Activated B cell treated with CpG ODN at 0.5 μM for 24 hours (primary cell): ENCODE measurements at regions of chr9 and their contacts with region 1.

Region 1: DNA sequence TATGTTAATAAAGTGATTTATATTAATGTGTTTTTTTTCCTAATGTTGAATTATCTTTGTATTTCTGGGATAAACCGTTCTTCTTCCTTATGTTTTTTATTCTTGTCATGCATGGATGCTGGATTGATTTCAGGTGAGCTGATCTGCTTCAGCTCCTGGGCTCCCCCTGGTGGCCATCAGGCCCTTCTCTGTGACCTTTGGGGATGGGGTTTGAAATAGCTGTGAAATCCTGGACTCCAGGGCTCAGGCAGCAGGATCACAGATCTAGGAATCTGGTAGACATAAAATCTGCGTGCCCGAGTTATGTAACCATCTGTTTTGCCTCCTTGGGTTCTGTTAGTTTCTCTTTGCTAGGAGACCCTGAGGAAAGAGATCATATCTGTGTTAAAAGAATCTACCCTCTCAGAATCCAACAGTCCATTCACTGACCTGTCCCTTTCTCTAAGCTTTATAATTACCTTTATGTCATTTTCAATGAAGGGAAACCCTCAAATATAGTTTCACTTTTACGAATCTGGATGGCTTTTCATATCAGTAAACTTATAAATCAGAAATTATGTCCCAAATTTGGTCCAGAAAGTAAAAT is 12.2 kb upstream of the OR13J1 start:
- DNase-seq: peak; percentile 74
- ATAC-seq: peak; percentile 58
- H3K4me3 Mint-ChIP-seq: no peak overlapping the region
- H3K27ac Mint-ChIP-seq: no peak overlapping the region
- H3K4me1 Mint-ChIP-seq: no peaks in the 10 kb centered on the region
- H3K27me3 Mint-ChIP-seq: peaks cover 10% of the 10 kb centered on the region
- CTCF ChIP-seq: no peak

Region 2: DNA sequence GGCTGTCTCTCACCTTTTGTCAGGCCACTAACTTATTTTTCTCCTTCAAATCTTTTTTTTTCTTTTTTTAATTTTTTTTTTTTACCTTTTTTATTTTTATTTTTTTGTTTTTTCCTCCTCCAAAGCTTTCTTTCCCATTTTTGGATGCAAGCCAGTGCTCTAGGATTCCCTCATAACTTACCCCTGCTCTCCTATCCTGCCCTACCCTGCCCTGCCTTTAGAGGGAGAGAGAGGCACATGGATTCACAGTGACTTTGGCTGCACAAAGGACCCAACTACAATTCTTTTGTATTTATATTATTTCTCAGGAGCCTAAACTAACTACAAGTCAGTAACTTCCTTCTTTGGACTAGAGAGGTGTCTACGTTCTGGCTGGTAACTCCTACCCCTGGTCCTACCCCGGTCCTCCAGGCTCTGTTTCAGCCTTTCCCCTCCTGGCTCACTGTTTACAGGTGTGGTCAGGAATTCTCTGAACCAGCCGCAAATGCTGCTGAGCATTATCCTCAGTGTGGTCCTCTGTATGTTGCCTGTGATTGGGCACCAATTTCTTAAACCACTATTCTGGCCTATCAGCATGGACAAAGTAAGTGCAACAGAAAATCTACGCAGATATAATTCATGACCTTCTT is 400.9 kb before region 1 on chr9:
- CTCF ChIA-PET with region 1: no interaction called
- POLR2A ChIA-PET with region 1: no interaction called
- intact Hi-C with region 1: loop called (anchors 2 kb)
- DNase-seq: no peak
- ATAC-seq: peak; percentile 66
- H3K4me3 Mint-ChIP-seq: no peak overlapping the region
- H3K27ac Mint-ChIP-seq: no peak overlapping the region
- H3K4me1 Mint-ChIP-seq: no peaks in the 10 kb centered on the region
- H3K27me3 Mint-ChIP-seq: peaks cover 10% of the 10 kb centered on the region
- CTCF ChIP-seq: no peak

Region 3: DNA sequence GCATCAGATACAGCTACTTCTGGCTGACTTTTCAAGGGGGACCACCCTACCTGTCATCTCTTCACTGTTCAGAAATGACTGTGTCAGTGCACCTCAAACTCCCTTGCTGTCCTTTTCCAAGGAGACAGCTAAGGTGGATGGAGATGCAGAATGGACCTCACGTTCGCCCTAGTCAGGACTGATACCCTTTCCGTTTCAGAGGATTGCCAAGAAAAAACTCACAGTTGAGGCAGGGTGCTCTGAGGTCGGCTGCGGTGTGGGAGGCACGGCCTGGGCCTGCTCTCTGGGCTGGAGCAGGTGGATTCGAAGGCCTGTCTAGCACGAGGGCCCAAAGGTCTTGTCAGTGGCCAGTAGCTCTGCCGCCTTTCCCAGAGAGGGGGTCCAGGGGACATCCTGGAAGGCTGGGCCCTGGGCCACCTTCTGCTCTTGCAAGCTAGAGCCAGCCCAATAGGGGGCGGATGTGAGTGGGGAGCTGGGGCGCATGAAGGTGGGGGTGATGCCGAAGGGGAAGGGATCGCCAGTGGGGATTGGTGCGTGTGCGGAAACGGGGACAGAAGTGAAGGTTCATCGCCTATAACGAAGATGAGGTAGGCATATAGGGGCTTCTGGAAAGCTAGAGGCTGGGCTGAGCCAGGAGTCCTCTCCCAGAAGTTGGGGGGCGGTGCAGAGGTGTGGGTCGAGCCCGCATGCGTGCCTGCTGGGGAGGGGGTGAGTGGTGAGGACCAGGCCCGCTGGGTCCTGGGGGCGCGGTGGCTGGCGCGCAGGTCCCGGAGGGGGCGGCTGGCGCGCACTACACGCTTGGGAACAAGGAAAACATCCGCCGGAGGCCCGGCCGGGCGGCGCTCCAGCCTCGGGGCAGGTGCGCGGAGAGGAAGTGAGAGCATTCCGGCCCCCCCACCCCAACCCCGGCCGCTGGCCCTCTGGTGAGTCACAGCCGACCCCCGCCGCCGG is 125.8 kb before region 1 on chr9:
- CTCF ChIA-PET with region 1: interaction called, 15 read pairs
- POLR2A ChIA-PET with region 1: no interaction called
- intact Hi-C with region 1: no loop called
- DNase-seq: peak; percentile 68
- ATAC-seq: peak; percentile 73
- H3K4me3 Mint-ChIP-seq: peak overlapping the region; percentile 91
- H3K27ac Mint-ChIP-seq: peak overlapping the region; percentile 93
- H3K4me1 Mint-ChIP-seq: peaks cover 55% of the 10 kb centered on the region
- H3K27me3 Mint-ChIP-seq: no peaks in the 10 kb centered on the region
- CTCF ChIP-seq: no peak

Region 4: DNA sequence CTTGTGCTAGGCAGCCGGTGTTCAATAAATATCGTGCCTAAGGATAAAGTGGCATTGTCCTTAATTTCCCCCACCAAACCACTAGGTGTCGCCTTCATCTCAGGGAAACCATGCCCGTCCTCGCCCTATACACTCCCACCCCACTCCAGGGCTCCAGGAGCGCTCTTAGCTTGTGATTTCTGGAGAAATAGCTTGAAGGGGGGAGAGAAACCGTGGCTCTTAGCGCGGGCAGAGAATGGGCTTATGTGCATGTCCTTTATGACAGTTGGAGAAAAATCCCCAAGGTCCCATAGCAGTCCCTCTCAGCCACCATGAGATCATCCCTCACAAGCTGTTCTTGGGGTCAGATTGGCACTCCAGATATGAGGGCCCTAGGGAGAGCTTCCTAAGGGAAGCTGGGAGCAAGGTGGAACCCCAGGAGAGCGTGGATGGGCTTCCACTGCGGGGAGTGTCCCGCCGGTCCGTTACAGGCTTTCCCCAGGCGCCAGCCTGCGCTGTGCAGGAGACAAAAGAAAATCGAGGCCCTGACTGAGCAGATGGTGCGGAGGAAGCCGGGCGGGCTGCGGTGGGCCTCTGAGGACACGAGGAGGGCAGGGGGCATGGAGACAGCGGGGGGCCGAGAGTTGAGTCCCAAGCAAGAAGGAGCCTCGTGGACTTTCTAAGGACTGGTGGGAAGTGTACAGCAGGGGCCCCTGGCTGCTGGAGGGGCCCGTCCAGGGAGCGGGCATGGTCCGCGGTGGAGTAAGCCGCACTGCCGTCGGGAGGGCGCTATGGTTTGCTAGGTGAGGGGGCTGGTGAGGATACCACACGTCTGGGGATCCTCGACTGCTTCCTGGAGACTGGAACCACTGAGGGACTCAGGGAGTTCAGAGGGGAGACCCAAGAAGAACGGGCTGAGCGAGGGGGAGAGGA is 91.7 kb before region 1 on chr9:
- CTCF ChIA-PET with region 1: interaction called, 112 read pairs
- POLR2A ChIA-PET with region 1: interaction called, 4 read pairs
- intact Hi-C with region 1: loop called (anchors 1 kb)
- DNase-seq: no peak
- ATAC-seq: peak; percentile 92
- H3K4me3 Mint-ChIP-seq: peak overlapping the region; percentile 58
- H3K27ac Mint-ChIP-seq: no peak overlapping the region
- H3K4me1 Mint-ChIP-seq: peaks cover 10% of the 10 kb centered on the region
- H3K27me3 Mint-ChIP-seq: peaks cover 5% of the 10 kb centered on the region
- CTCF ChIP-seq: no peak

Region 5: DNA sequence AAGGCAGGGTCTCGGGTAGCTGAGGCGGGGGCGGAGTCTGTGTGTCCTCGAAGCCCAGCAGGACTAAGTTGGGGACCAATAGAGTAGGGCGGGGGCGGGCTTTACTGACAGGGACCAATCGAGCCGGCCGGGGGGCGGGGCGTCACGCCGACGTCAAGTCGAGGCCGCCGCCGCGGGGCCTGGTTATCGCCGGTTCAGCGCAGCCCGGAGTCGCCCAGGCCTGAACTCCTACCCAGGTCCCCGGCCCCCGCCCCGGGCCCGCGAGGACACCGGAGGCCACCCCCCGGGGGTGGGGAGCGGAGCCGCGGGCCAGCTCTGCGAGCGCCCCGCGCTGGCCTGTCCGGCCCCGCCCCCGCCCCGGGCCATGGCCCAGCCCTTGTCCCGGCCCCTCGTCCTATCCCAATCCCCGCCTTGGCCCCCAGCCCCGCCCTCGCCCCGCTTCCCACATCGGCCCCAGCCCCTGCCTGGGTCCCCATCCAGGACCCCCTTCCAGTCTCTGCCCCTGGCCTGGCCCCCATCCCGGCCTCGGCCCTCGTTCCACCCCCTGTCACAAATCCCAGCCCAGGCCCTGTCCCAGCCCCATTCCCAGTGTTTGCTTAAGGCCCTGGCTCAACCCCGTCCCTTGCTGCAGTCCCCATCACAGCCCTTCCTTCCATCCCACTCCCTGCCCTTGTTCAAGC is 53.1 kb before region 1 on chr9 and contains the start of gene TMEM8B:
- CTCF ChIA-PET with region 1: interaction called, 114 read pairs
- POLR2A ChIA-PET with region 1: interaction called, 4 read pairs
- intact Hi-C with region 1: loop called (anchors 1 kb)
- DNase-seq: peak; percentile 89
- ATAC-seq: peak; percentile 92
- H3K4me3 Mint-ChIP-seq: peak within 1 kb of the TSS; percentile 95
- H3K27ac Mint-ChIP-seq: peak within 1 kb of the TSS; percentile 86
- H3K4me1 Mint-ChIP-seq: peaks cover 34% of the 10 kb centered on the region
- H3K27me3 Mint-ChIP-seq: no peaks in the 10 kb centered on the region
- CTCF ChIP-seq: no peak
- total RNA-seq, gene TMEM8B: 5.0 and 8.0 TPM in 2 replicates

Region 6: DNA sequence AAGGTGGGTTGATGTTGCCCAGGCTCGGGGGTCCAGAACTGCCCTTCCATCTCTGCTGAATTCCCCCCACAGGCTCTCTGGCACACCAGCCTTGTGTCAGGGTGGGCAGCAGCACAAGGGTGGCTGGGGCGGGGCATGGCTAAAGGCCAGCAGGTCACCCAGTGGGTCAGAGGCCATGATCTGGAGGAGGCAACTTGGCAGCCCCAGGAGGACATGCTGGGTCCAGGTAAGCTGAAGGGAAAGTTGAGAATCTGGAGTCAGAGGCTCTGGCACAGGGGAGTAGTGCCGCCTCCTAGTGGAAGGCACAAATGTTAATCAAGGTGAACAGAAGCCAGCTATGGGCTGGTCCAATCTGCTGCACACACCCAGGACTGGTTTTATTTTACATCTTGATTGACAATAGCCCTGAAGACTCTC is 47.1 kb before region 1 on chr9:
- CTCF ChIA-PET with region 1: interaction called, 10 read pairs
- POLR2A ChIA-PET with region 1: no interaction called
- intact Hi-C with region 1: no loop called
- DNase-seq: no peak
- ATAC-seq: no peak
- H3K4me3 Mint-ChIP-seq: no peak overlapping the region
- H3K27ac Mint-ChIP-seq: no peak overlapping the region
- H3K4me1 Mint-ChIP-seq: peaks cover 35% of the 10 kb centered on the region
- H3K27me3 Mint-ChIP-seq: no peaks in the 10 kb centered on the region
- CTCF ChIP-seq: no peak

Region 7: DNA sequence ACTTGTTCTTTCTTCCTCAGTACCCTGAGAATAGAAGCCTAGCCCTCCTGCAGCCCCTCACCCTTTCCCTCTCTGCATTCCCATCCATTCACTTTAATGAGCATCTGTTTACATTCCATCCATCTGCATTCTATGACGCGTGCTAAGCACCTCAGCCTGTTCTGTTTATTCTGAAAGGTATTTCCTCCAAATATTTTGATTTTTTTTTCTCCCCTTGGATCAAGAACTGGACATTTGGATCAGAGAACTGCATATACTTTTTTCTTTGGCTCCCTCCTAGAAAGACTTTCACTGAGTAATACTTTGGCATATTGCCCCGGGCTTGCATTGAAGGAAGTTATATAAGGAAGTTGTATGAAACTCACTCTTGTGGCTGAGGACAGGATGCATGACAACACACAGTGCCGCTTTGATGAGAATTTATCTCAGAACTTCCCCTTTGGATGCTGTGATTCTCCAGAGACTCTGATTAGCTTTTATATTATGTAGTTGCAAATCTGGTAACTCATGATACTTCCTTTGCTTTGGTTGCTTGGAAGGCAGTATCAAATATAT is 37.6 kb before region 1 on chr9:
- CTCF ChIA-PET with region 1: interaction called, 9 read pairs
- POLR2A ChIA-PET with region 1: no interaction called
- intact Hi-C with region 1: loop called (anchors 5 kb)
- DNase-seq: no peak
- ATAC-seq: peak; percentile 80
- H3K4me3 Mint-ChIP-seq: peak overlapping the region; percentile 33
- H3K27ac Mint-ChIP-seq: peak overlapping the region; percentile 28
- H3K4me1 Mint-ChIP-seq: peaks cover 81% of the 10 kb centered on the region
- H3K27me3 Mint-ChIP-seq: no peaks in the 10 kb centered on the region
- CTCF ChIP-seq: no peak

Region 8: GRCh38 chr9:35935755-35936509 is 53.6 kb after region 1 on chr9:
- CTCF ChIA-PET with region 1: no interaction called
- POLR2A ChIA-PET with region 1: no interaction called
- intact Hi-C with region 1: no loop called
- DNase-seq: no peak
- ATAC-seq: no peak
- H3K4me3 Mint-ChIP-seq: no peak overlapping the region
- H3K27ac Mint-ChIP-seq: no peak overlapping the region
- H3K4me1 Mint-ChIP-seq: peaks cover 23% of the 10 kb centered on the region
- H3K27me3 Mint-ChIP-seq: peaks cover 14% of the 10 kb centered on the region
- CTCF ChIP-seq: no peak